ENCODE measurements at regions of chr9 and their contacts with region 1.

Region 1: GRCh38 chr9:105694190-105694847 is at the start of gene TMEM38B:
- DNase-seq: peak; percentile 77 to 86 (median 83)
- H3K4me3 ChIP-seq: peak within 1 kb of the TSS; percentile 59 to 79
- H3K4me3 Mint-ChIP-seq: peak within 1 kb of the TSS; percentile 87 to 96 (median 90)
- H3K27ac ChIP-seq: peak within 1 kb of the TSS; percentile 37
- H3K27ac Mint-ChIP-seq: peak within 1 kb of the TSS; percentile 63 to 85 (median 79)
- H3K4me1 ChIP-seq: peaks cover 20% of the 10 kb centered on the region
- H3K4me1 Mint-ChIP-seq: peaks cover 16 to 31% (median 23%) of the 10 kb centered on the region in 4 donors
- H3K27me3 ChIP-seq: peaks cover 11% of the 10 kb centered on the region
- H3K27me3 Mint-ChIP-seq: peaks cover 7 to 21% of the 10 kb centered on the region in 2 donors
- total RNA-seq, gene TMEM38B: 13.4 to 16.6 TPM

Region 2: DNA sequence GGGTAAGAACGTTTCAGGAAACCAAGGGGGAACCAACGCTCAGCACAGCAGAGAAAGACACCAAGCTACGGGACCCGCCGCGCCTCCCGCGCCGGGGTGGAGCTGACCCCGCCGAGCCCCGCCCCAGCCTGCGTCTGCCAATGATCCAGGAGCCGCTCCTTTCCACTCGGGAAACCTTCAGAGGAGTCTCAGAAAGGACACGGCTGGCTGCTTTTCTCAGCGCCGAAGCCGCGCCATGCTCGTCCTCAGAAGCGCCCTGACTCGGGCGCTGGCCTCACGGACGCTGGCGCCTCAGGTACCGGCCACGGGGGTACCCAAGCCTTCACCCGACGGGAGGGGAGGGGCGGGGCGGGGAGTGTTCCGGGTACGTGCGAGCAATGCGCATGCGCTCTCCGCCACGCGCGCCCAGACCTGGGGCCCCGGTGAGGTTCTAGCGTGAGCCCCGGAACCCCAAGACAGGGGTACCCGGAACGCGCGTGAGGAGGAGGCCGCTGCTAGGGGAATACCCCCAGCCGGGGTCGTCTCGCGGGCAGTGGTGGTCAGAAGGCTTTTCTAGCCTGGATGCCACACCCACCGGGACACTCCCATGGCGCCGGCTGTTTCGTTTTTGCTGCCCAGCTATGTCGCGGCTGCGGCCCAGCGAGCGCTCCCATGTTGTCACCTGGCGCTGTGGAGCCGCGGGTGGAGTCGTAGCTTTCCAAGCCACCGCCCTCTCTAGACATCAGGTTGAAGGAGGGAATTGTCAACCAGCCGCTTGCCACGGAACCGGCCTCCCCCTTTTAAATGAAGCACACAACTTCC is 946.6 kb before region 1 on chr9 and contains the start of gene NIPSNAP3A:
- CTCF ChIA-PET with region 1: no interaction called
- POLR2A ChIA-PET with region 1: interaction called, 4 read pairs
- intact Hi-C with region 1: loop called (anchors 5 kb)
- DNase-seq: peak; percentile 85 to 95 (median 90)
- H3K4me3 ChIP-seq: peak within 1 kb of the TSS; percentile 56 to 89
- H3K4me3 Mint-ChIP-seq: peak within 1 kb of the TSS; percentile 91 to 99 (median 98)
- H3K27ac ChIP-seq: peak within 1 kb of the TSS; percentile 85
- H3K27ac Mint-ChIP-seq: peak within 1 kb of the TSS; percentile 90 to 99 (median 99)
- H3K4me1 ChIP-seq: peaks cover 15% of the 10 kb centered on the region
- H3K4me1 Mint-ChIP-seq: peaks cover 10 to 21% (median 17%) of the 10 kb centered on the region in 4 donors
- H3K27me3 ChIP-seq: no peaks in the 10 kb centered on the region
- H3K27me3 Mint-ChIP-seq: no peaks in the 10 kb centered on the region
- total RNA-seq, gene NIPSNAP3A: 11.3 to 13.6 TPM

Region 3: DNA sequence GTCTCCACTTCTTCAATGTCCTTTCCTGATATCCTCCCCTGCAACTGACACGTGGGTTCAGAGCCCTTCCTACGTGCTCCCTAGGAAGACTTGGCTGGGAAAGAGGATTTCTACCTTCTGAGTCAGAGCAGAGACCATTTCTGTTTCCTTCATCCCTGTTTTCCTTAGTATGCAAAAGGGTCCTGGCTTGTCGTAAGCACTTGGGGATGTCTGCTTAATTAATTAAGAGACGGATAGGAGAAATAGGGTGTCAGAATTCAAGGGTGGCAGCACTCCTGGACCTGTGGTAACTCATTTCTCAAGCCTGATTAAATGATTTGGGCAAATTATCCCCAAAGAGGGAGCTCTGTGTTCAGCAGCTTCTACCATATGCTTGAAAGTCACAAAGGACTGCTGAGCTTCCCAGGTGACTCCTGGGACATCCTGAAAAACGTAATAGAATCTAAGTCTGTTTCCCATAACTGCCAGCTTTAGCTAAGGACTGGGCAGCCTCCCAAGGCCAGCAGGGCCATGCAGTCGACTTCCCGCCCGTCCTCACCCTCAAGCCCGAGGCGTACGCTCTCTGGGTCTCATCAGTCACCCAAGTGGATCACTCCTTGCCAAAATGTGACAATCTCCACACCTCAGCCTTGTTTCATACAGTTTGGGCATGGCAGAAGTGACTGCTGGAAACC is 786.9 kb before region 1 on chr9:
- CTCF ChIA-PET with region 1: no interaction called
- POLR2A ChIA-PET with region 1: no interaction called
- intact Hi-C with region 1: no loop called
- DNase-seq: no peak
- H3K4me3 ChIP-seq: no peak overlapping the region
- H3K4me3 Mint-ChIP-seq: no peak overlapping the region
- H3K27ac ChIP-seq: no peak overlapping the region
- H3K27ac Mint-ChIP-seq: no peak overlapping the region
- H3K4me1 ChIP-seq: no peaks in the 10 kb centered on the region
- H3K4me1 Mint-ChIP-seq: peaks cover 0 to 17% (median 6%) of the 10 kb centered on the region in 4 donors
- H3K27me3 ChIP-seq: no peaks in the 10 kb centered on the region
- H3K27me3 Mint-ChIP-seq: peaks cover 0 to 5% of the 10 kb centered on the region in 2 donors

Region 4: DNA sequence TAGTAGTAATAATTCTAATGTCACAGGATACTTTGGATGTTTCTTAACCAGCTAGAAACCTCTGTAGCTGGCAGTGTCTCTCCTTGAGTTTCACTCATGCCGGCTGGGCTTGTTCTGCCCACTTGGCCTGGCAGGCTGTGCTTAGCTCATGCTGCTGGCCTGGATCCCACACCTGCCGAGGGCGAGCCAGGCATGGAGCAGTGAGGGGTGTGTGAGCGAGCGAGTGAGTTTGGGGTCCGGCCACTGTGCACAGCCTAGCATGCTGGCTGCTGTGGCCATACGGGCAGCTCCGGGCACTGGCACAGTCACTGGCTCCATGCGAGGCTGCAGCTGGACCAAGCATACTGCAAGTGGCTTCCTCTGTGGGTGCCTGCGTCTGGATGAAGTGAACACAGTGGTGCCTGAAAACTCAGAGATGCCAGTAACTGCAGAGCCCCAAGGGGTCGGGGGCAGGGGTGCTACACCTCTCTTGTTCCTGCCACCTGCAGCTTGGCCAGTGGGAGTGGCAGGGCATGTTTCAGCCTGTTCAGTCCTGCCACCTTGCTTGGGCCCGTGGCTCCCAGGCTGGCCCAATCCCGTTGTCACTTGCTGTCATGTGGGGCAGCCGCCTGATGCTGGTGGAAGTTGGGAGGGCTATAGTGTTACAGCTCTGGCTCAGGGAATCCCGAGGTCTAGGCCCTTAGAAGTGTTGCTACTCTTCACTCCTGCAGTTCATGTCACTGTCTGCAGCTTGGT is 236.6 kb before region 1 on chr9:
- CTCF ChIA-PET with region 1: no interaction called
- POLR2A ChIA-PET with region 1: no interaction called
- intact Hi-C with region 1: loop called (anchors 10 kb)
- DNase-seq: no peak
- H3K4me3 ChIP-seq: no peak overlapping the region
- H3K4me3 Mint-ChIP-seq: no peak overlapping the region
- H3K27ac ChIP-seq: no peak overlapping the region
- H3K27ac Mint-ChIP-seq: no peak overlapping the region
- H3K4me1 ChIP-seq: no peaks in the 10 kb centered on the region
- H3K4me1 Mint-ChIP-seq: no peaks in the 10 kb centered on the region
- H3K27me3 ChIP-seq: no peaks in the 10 kb centered on the region
- H3K27me3 Mint-ChIP-seq: no peaks in the 10 kb centered on the region

Region 5: GRCh38 chr9:105541838-105542237 is 152.5 kb before region 1 on chr9:
- CTCF ChIA-PET with region 1: no interaction called
- POLR2A ChIA-PET with region 1: no interaction called
- intact Hi-C with region 1: no loop called
- DNase-seq: no peak
- H3K4me3 ChIP-seq: no peak overlapping the region
- H3K4me3 Mint-ChIP-seq: no peak overlapping the region
- H3K27ac ChIP-seq: no peak overlapping the region
- H3K27ac Mint-ChIP-seq: no peak overlapping the region
- H3K4me1 ChIP-seq: no peaks in the 10 kb centered on the region
- H3K4me1 Mint-ChIP-seq: no peaks in the 10 kb centered on the region
- H3K27me3 ChIP-seq: no peaks in the 10 kb centered on the region
- H3K27me3 Mint-ChIP-seq: no peaks in the 10 kb centered on the region

Region 6: GRCh38 chr9:105656131-105656921 is 38.0 kb before region 1 on chr9:
- CTCF ChIA-PET with region 1: no interaction called
- POLR2A ChIA-PET with region 1: no interaction called
- intact Hi-C with region 1: loop called (anchors 5 kb)
- DNase-seq: no peak
- H3K4me3 ChIP-seq: peak overlapping the region in 1 of 2 donors; percentile 41
- H3K4me3 Mint-ChIP-seq: peak overlapping the region; percentile 65 to 83 (median 80)
- H3K27ac ChIP-seq: no peak overlapping the region
- H3K27ac Mint-ChIP-seq: no peak overlapping the region
- H3K4me1 ChIP-seq: no peaks in the 10 kb centered on the region
- H3K4me1 Mint-ChIP-seq: peaks cover 9 to 18% (median 11%) of the 10 kb centered on the region in 4 donors
- H3K27me3 ChIP-seq: no peaks in the 10 kb centered on the region
- H3K27me3 Mint-ChIP-seq: peaks cover 32 to 36% of the 10 kb centered on the region in 2 donors

Region 7: DNA sequence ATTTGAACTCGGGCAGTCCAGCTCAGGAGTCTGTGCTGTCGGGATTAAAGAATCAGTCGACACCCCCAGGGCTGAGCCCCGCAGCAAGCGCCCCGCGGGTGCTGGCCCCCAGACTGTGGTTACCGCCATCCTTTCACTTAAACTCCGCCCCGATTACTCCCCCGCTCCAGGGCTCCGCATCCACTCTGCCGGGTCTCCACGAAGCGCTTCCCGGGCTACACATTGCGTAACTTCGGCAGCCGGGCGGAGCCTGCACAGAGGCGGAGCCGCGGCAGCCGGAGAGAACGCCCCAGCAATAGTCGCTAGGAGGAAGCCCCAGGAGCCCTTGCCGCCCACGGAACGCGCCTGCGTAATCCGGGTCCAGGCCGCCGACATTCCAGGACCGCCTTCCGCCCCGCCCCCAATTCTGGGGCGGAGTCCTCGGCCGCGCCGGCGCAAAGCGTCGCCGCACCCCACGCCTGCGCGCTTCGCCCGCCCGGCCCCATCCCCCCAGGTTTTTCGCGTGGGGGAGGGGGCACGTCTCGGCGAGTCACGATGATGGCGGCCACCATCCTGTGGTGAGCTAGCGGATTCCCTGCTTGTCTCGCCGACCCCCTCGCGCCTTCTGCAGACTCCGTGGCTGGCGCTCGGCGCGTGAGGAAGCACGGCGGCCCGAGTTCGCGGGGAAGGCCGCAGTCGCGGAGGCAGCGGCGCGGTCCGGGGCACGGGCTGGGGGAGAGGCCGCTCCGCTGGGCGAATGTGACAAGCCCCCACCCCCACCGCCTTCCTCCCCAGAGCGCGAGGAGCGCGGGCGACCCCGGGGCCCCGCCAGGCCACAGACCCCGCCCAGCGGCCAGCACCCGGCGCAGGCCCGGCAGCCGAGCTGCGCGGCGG is 1588.7 kb after region 1 on chr9 and contains the start of gene RAD23B:
- CTCF ChIA-PET with region 1: no interaction called
- POLR2A ChIA-PET with region 1: no interaction called
- intact Hi-C with region 1: loop called (anchors 5 kb)
- DNase-seq: peak; percentile 96 to 100 (median 99)
- H3K4me3 ChIP-seq: peak within 1 kb of the TSS; percentile 85 to 89
- H3K4me3 Mint-ChIP-seq: peak within 1 kb of the TSS; percentile 94 to 100 (median 98)
- H3K27ac ChIP-seq: peak within 1 kb of the TSS; percentile 91
- H3K27ac Mint-ChIP-seq: peak within 1 kb of the TSS; percentile 92 to 98 (median 95)
- H3K4me1 ChIP-seq: peaks cover 44% of the 10 kb centered on the region
- H3K4me1 Mint-ChIP-seq: peaks cover 25 to 55% (median 36%) of the 10 kb centered on the region in 4 donors
- H3K27me3 ChIP-seq: no peaks in the 10 kb centered on the region
- H3K27me3 Mint-ChIP-seq: no peaks in the 10 kb centered on the region
- total RNA-seq, gene RAD23B: 49.5 to 54.2 TPM